Heart left ventricle (tissue), 16 donors: ENCODE measurements at regions of chr16 and their contacts with region 1.

Region 1: DNA sequence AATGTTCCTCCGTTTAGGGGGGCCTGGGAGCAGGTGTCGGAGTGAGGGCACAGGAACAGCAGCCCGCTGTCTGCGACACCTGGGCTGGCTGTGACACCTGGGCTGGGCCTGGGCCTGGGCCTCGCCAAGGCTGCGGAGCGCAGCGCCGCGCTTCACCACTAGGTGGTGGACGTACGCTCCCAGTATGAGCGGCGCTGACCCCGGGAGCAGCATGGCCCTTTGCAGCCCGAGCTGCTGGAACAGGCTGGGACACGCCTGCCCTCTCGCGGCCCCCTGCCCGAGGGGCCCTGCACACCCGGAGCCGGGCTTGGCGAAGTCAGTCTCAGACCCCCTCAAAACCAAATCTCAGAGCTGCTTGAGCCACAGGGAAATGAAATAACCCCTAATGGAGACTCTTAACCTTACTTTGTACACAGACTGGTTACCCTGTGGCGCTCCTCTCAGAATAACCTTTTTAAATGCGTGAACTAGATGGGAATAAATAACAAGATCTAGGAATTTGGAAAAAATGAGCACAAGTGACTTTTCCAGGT is 38.6 kb upstream of the FA2H start:
- DNase-seq: peak; percentile 61 to 88 (median 73)
- ATAC-seq: peak; percentile 90 to 99 (median 98)
- H3K4me3 ChIP-seq: no peak overlapping the region
- H3K27ac ChIP-seq: no peak overlapping the region
- H3K4me1 ChIP-seq: peaks cover 0 to 6% (median 0%) of the 10 kb centered on the region in 12 donors
- H3K27me3 ChIP-seq: no peaks in the 10 kb centered on the region
- CTCF ChIP-seq: peak; percentile 78 to 96 (median 90)
- POLR2A ChIP-seq: no peak

Region 2: DNA sequence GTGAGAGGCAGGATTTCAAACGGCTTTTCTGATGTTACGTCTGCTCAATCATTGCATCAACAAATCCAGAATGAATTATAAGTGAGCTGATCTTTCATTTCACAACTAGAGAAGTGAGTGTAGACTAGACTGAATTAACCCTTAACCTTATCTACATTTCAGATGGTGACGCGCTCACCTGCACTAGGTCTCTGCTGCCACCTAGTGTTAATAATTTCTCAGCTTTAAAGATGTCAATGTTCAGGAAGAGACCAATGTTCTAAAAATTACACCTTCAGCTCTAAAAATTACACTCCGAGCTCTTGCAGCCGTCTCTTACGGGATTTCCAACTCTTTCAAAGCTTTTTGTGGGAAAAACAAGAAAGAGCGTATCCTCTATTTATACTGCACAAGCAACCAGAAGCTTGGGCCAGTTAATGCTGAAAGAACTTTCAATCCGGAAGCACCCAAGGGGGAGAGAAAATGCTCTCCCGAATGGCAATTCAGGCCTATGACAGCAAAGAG is 49.6 kb after region 1 on chr16:
- intact Hi-C with region 1: loop called in 9 of 10 experiments (anchors 1 to 5 kb)
- DNase-seq: no peak
- ATAC-seq: peak in 1 of 4 donors; percentile 52
- H3K4me3 ChIP-seq: no peak overlapping the region
- H3K27ac ChIP-seq: no peak overlapping the region
- H3K4me1 ChIP-seq: peaks cover 0 to 9% (median 0%) of the 10 kb centered on the region in 12 donors
- H3K27me3 ChIP-seq: no peaks in the 10 kb centered on the region
- CTCF ChIP-seq: peak; percentile 73 to 93 (median 81)
- POLR2A ChIP-seq: no peak